ENCODE measurements at regions of chr19 and their contacts with region 1.

Region 1: DNA sequence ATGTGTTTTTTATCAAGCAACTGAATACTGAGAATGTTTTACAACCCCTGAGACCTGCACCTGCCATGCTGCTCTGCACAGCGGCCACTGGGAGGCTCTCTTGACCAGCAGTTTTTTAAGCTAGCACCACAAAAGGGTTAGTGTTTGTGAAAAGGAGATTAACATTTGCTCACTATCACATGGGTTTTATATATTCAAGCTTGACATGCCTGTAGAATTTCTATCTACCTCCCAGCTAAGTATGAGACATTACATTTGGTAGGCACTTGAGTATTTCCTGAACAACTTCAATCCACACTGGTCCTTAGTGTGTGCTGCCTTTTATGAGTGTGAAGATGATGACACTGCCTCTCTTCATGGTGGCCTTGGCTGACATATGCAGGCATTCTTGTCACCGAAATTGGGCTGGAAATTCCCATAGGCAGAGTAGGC is 1238.9 kb downstream of the UQCRFS1 start:
- DNase-seq: no peak
- ATAC-seq: peak in 2 of 4 donors; percentile 48 to 63
- H3K4me3 ChIP-seq: no peak overlapping the region
- H3K27ac ChIP-seq: no peak overlapping the region
- H3K4me1 ChIP-seq: no peaks in the 10 kb centered on the region
- H3K27me3 ChIP-seq: peaks cover 0 to 13% (median 0%) of the 10 kb centered on the region in 9 donors
- CTCF ChIP-seq: peak; percentile 17 to 70 (median 52)
- POLR2A ChIP-seq: no peak

Region 2: DNA sequence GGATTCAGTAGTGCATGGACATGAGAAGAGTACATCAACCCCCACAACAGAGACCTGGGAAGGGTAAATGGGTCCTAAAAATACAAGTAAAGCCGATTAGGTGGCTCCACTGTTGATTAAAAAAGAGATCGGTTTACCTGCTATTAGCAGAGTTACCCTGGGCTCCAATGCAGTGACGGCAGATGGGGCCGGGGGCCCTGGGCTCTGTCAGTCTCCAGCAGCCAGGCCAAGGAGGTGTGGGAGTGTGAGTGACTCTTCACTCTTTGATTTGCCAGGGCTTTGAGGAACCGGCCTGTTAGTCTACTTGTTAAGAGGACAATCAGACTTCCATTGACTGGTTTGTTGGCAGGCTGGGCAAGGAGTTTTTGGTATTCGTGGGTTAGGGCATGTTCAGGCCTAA is 129.8 kb before region 1 on chr19:
- intact Hi-C with region 1: no loop called
- DNase-seq: no peak
- ATAC-seq: no peak
- H3K4me3 ChIP-seq: no peak overlapping the region
- H3K27ac ChIP-seq: no peak overlapping the region
- H3K4me1 ChIP-seq: no peaks in the 10 kb centered on the region
- H3K27me3 ChIP-seq: no peaks in the 10 kb centered on the region
- CTCF ChIP-seq: no peak
- POLR2A ChIP-seq: no peak

Region 3: DNA sequence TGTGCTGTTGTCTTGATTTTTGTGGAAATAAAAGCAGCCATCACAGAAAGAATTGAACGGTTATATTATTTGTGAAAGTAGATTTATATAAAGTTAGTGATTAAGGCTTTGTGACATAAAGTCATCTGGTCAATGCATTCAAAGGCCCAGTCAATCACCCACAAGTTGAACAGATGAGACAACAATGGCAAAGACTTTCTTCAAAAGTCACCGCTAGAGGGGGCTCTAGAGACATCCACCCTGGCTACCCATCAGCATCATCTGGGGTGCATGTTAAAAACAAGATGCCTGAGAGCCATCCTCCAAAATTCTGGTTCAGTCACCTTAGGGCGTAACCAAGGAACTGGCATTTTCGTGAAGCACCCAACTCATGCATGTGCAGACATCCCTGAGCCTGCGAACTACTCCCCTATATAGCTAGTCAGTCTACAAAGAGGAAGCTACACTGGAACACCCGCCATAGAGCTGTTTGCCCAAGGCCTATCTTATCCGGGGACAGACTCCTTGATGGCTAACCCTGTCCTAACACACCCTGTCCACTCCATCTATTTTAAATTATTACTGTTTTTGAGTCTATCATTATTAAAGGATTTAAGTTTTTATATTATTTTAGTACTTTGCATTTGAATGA is 268.3 kb after region 1 on chr19:
- intact Hi-C with region 1: loop called in 1 of 10 experiments (anchors 10 kb)
- DNase-seq: no peak
- ATAC-seq: no peak
- H3K4me3 ChIP-seq: no peak overlapping the region
- H3K27ac ChIP-seq: no peak overlapping the region
- H3K4me1 ChIP-seq: no peaks in the 10 kb centered on the region
- H3K27me3 ChIP-seq: peaks cover 0 to 7% (median 0%) of the 10 kb centered on the region in 9 donors
- CTCF ChIP-seq: peak; percentile 23 to 62 (median 46)
- POLR2A ChIP-seq: no peak

Region 4: DNA sequence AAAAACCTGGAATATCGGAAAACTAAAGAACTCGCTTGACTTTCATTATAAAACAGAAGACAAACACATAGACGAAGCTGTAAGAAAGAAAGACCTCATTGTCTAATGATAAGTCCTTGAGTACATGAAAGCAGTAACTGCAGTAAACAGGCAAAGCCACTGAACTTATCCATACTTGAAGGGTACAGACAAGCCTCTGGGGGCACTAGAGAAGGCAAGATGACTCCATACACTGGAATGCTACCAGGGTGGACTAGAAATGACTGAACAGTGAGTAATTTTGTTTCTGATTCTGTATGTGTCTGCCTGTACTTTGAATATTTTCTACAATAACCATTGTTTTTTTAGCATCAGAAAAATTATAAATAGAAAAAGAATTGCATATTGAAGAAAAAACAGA is 730.9 kb after region 1 on chr19:
- intact Hi-C with region 1: loop called in 5 of 10 experiments (anchors 5 to 10 kb)
- DNase-seq: no peak
- ATAC-seq: no peak
- H3K4me3 ChIP-seq: no peak overlapping the region
- H3K27ac ChIP-seq: no peak overlapping the region
- H3K4me1 ChIP-seq: no peaks in the 10 kb centered on the region
- H3K27me3 ChIP-seq: peaks cover 0 to 5% (median 0%) of the 10 kb centered on the region in 9 donors
- CTCF ChIP-seq: no peak
- POLR2A ChIP-seq: no peak

Region 5: GRCh38 chr19:28727480-28728159 is 753.5 kb after region 1 on chr19:
- intact Hi-C with region 1: loop called in 1 of 10 experiments (anchors 10 kb)
- DNase-seq: peak in 2 of 5 donors; percentile 28 to 58
- ATAC-seq: peak in 1 of 4 donors; percentile 46
- H3K4me3 ChIP-seq: peak overlapping the region in 6 of 12 donors; percentile 5 to 34 (median 11)
- H3K27ac ChIP-seq: no peak overlapping the region
- H3K4me1 ChIP-seq: peaks cover 0 to 5% (median 0%) of the 10 kb centered on the region in 12 donors
- H3K27me3 ChIP-seq: peaks cover 11 to 48% (median 16%) of the 10 kb centered on the region in 9 donors
- CTCF ChIP-seq: peak in 5 of 12 donors; percentile 10 to 31 (median 25)
- POLR2A ChIP-seq: no peak

Measured in heart left ventricle (tissue), 16 donors.